Lower leg skin (tissue), 4 donors: ENCODE measurements at regions of chr10 and their contacts with region 1.

Region 1: GRCh38 chr10:33008499-33009243 is 50.6 kb upstream of the ITGB1 start:
- DNase-seq: peak in 1 of 2 donors; percentile 75
- H3K4me3 ChIP-seq: no peak overlapping the region
- CTCF ChIP-seq: peak in 1 of 3 donors; percentile 89
- POLR2A ChIP-seq: no peak

Region 2: GRCh38 chr10:32795598-32796183 is 213.0 kb before region 1 on chr10:
- intact Hi-C with region 1: loop called (anchors 5 kb)
- DNase-seq: no peak
- H3K4me3 ChIP-seq: no peak overlapping the region
- CTCF ChIP-seq: no peak
- POLR2A ChIP-seq: no peak

Region 3: GRCh38 chr10:33082373-33082895 is 73.8 kb after region 1 on chr10:
- intact Hi-C with region 1: no loop called
- DNase-seq: no peak
- H3K4me3 ChIP-seq: no peak overlapping the region
- CTCF ChIP-seq: no peak
- POLR2A ChIP-seq: no peak